Activated CD4-positive, alpha-beta memory T cell treated with anti-CD3 and anti-CD28 coated beads, Interleukin-2, amount 10 ng/mL, durations not matched to agents 7 days and 5 days (primary cell): ENCODE measurements at regions of chr5 and their contacts with region 1.

Region 1: GRCh38 chr5:97162045-97162444 is 19.6 kb upstream of the LIX1 start:
- DNase-seq: peak; percentile 56
- H3K4me3 Mint-ChIP-seq: no peak overlapping the region
- H3K27ac Mint-ChIP-seq: no peak overlapping the region
- H3K4me1 Mint-ChIP-seq: peaks cover 19% of the 10 kb centered on the region
- H3K27me3 Mint-ChIP-seq: no peaks in the 10 kb centered on the region

Region 2: DNA sequence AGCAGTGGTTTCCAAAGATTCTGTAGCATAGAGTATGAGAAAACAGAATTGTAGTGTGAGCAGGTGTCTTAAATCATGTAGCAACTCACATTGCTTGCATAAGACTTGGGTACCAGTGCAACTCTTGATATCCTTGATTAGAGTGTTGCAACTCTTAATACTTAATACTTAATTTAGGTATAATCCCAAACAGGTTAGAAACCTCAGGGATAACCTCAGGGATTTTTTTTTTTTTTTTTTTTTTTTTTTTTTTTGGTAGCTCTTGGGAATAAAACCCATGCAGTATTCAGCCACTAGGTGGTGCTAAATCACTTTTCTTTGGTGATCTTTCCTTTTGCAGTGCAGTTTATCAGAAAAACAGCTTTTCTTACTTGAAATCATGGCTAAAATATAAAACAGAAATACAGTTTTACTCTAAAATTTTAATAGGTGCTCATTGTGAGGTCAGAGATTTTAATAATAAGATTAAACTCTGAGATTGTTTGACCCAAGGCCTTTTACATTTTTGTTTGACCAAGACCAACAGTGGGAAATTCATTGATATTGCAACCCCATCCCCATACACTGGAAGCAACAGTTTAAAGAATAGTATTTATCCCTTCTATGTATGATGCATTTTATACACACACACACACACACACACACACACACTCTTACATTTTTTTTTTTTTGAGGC is 409.6 kb before region 1 on chr5:
- CTCF ChIA-PET with region 1: interaction called, 27 read pairs
- POLR2A ChIA-PET with region 1: interaction called, 3 read pairs
- DNase-seq: no peak
- H3K4me3 Mint-ChIP-seq: no peak overlapping the region
- H3K27ac Mint-ChIP-seq: no peak overlapping the region
- H3K4me1 Mint-ChIP-seq: no peaks in the 10 kb centered on the region
- H3K27me3 Mint-ChIP-seq: no peaks in the 10 kb centered on the region

Region 3: DNA sequence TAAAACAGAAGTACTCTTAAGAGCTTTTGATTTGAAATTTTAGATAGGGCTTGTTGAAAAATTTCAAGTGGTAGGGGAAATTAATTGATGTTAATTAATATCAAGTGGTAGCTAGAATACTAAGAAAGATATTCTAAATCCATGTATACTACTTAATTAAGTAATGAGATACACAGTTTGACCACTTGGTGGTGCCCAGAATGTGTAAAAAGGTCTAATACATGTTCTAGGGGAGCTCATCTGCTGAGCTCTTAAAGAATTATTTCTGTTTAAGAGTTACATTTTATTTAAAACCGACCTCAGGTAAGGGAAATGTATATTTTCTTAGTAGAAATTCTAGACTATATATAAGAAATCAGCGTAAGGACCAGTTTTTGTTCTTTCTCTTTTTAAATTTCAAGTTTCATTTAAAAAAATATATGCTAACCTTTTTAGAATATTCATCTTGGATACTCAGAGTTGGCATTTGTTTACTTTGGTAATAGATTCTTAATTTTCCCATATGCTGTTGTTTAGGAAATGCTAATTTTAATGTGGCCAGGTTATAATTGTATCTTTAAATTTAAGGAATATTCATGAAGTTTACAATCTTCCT is 164.7 kb before region 1 on chr5:
- CTCF ChIA-PET with region 1: interaction called, 28 read pairs
- POLR2A ChIA-PET with region 1: no interaction called
- DNase-seq: no peak
- H3K4me3 Mint-ChIP-seq: no peak overlapping the region
- H3K27ac Mint-ChIP-seq: no peak overlapping the region
- H3K4me1 Mint-ChIP-seq: peaks cover 21% of the 10 kb centered on the region
- H3K27me3 Mint-ChIP-seq: no peaks in the 10 kb centered on the region

Region 4: DNA sequence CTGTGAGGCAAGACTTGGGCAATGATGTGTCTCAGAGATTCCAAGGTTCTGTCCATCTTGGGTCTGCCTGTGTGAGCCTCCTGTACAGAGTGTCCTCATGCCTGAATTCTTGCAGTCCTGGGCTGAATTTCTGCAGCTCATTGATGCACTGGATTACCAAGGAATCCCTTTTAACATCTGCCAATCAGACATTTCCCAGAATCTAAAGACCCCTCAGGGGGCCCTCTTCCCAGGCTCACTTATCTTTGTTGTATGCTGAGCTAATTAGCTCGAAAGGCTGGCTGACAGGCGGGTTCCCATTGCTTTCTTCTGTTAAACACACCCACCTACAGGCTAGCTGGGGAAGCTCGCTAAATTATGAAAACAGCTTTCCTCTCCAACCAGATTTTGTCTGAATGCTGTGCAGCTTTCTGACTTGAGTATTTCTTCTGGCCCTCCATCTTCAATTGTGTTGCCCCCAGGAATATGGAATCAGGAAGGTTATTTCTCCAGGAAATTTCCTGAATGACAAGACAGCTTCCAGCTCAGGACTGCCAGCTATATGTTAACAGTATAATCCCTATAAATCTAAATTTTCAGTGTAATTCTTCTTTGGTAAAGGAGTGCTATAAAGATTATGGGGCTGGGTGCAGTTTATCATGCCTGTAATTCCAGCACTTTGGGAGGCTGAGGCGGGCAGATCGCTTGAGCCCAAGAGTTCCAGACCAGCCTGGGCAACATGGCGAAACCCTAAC is 19.4 kb before region 1 on chr5 and contains the start of gene LIX1:
- CTCF ChIA-PET with region 1: interaction called, 49 read pairs
- POLR2A ChIA-PET with region 1: no interaction called
- DNase-seq: peak; percentile 37
- H3K4me3 Mint-ChIP-seq: no peak within 1 kb of the TSS
- H3K27ac Mint-ChIP-seq: no peak within 1 kb of the TSS
- H3K4me1 Mint-ChIP-seq: no peaks in the 10 kb centered on the region
- H3K27me3 Mint-ChIP-seq: peaks cover 19% of the 10 kb centered on the region
- total RNA-seq, gene LIX1: not detected

Region 5: DNA sequence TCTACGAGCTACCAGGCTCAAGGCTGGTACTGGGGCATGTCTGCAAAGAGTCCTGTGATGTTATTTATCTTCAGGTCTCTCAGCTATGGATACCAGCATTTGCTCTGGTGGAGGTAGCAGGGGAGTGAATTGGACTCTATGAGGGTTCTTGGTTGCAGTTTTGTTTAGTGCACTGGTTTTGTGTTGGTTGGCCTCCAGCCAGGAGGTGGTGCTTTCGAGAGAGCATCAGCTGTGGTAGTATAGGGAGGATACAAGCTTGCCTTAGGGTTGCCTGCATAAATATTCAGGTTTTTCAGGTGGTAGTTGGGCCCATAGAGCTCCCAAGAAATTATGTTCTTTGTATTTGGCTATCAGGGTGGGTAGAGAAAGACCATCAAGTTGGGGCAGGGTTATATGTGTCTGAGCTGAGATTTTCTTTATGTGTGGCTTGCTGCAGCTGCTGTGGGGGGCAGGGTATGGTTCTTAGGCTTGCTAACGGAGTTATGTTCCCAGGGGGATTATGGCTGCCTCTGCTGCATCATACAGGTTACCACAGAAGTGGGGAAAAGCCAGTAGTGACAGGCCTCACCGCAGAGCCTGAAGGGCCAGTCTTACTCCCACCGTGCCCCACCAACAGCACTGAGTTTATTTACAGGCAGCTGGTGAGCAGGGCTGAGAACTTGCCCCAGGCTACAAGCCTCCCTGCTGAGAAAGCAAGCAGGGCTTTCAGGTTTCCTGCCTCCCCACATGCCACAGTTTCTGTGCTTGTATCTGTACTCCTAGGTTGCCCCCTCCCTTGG is 30.7 kb after region 1 on chr5:
- CTCF ChIA-PET with region 1: no interaction called
- POLR2A ChIA-PET with region 1: no interaction called
- DNase-seq: no peak
- H3K4me3 Mint-ChIP-seq: no peak overlapping the region
- H3K27ac Mint-ChIP-seq: no peak overlapping the region
- H3K4me1 Mint-ChIP-seq: peaks cover 6% of the 10 kb centered on the region
- H3K27me3 Mint-ChIP-seq: peaks cover 12% of the 10 kb centered on the region

Region 6: GRCh38 chr5:97231025-97231636 is 69.1 kb after region 1 on chr5:
- CTCF ChIA-PET with region 1: no interaction called
- POLR2A ChIA-PET with region 1: no interaction called
- DNase-seq: no peak
- H3K4me3 Mint-ChIP-seq: no peak overlapping the region
- H3K27ac Mint-ChIP-seq: no peak overlapping the region
- H3K4me1 Mint-ChIP-seq: no peaks in the 10 kb centered on the region
- H3K27me3 Mint-ChIP-seq: no peaks in the 10 kb centered on the region

Region 7: GRCh38 chr5:97425511-97425910 is 263.5 kb after region 1 on chr5:
- CTCF ChIA-PET with region 1: no interaction called
- POLR2A ChIA-PET with region 1: no interaction called
- DNase-seq: no peak
- H3K4me3 Mint-ChIP-seq: no peak overlapping the region
- H3K27ac Mint-ChIP-seq: no peak overlapping the region
- H3K4me1 Mint-ChIP-seq: no peaks in the 10 kb centered on the region
- H3K27me3 Mint-ChIP-seq: no peaks in the 10 kb centered on the region